Dorsolateral prefrontal cortex (tissue), 120 donors: ENCODE measurements at regions of chr13 and their contacts with region 1.

Region 1: DNA sequence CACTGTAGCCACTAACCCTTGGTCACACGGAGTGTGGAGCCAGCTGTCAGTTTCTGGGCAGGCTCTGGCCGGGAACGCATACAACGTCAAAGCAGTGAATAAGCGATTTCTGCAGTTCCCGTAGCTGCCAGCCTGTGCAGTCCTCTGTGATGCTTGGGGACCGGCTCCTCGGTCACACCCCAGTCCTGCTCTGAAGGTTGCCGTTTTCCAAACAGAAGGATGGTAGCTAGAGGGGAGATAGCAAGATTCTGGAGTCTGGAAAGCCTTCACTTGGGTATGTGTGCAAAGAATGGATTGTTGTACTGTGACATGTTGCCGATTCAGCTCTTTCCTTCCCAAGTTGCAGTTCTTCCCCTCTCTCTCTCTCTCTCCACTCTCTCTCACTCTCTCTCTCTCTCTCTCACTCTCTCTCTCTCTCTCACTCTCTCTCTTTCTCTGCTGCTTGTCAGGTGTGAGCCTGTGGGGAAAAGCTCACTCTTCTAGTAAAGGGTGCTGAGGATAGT is 38.7 kb upstream of the C1QTNF9 start:
- DNase-seq: peak; percentile 41 to 87 (median 76)
- H3K4me3 ChIP-seq: peak overlapping the region; percentile 24 to 75 (median 56)
- H3K27ac ChIP-seq: peak overlapping the region; percentile 62 to 96 (median 91)
- H3K27me3 ChIP-seq: no peaks in the 10 kb centered on the region
- CTCF ChIP-seq: peak in 12 of 56 donors; percentile 5 to 27 (median 15)

Region 2: DNA sequence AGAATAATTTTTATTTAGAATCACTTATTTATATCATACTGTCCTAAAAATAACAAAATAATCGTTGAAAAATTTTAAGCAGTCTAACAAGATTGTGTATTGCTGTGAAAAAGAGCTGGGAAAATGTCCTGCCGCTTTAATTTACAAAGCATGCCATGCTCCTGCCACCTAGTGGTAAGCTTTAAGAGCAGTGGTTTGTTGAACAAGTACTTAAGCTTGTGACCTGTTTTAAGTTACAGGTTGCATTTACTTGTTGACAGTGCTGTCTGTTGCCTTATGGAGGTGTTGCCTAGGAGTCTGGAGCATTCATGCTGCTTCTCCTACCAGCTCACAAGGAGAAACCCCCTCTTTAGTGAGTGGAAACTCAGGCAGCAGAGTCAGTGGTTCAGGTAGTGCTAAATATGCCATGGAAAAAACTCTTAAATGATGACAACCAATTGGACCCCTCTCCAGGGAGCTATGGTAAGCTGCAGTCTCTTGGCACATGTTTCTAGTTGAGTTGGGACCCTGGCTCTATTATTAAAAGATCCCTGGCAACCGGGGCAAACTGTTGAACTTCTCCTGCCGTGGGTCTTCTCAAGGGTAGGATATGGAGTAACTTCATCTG is 41.7 kb before region 1 on chr13:
- intact Hi-C with region 1: loop called in 1 of 2 experiments (anchors 5 kb)
- DNase-seq: peak in 2 of 10 donors; percentile 27 to 52
- H3K4me3 ChIP-seq: no peak overlapping the region
- H3K27ac ChIP-seq: peak overlapping the region in 7 of 59 donors; percentile 4 to 27 (median 17)
- H3K27me3 ChIP-seq: no peaks in the 10 kb centered on the region
- CTCF ChIP-seq: peak; percentile 69 to 97 (median 89)